K562 (cell line): ENCODE measurements at regions of chr2 and their contacts with region 1.

Region 1: DNA sequence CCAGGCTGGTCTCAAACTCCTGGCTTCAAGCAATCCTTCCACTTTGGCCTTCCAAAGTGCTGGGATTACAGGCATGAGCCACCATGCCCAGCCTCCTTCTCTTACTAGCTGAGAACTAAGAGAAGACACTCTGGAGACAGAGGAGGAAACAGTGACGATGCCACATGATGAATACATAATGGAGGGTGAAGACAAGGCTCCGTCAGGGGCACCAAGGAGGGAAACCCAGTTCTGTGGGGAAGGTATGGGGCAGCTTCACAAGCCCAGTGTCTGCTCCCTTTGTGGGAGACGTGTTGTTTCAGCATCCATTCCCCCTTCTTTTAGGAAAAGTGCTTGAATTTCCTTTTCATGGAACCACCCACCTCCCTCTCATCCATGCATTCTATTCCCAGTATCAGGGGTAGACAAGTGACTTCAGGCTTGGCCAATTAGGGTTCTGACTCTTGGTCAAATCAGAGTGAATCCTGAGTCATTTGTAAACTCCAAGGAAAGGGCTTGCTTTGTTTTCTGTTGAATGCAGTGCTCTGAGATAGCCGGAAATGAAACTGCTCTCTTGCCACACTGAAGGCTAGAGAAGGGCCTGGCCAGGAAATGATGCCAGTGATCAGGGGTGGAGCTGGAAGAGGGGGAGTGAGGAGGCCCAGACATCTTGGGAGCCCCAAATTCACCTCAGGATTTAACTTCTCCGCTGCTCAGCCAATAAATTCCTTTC is 23.7 kb downstream of the TMEM127 start:
- DNase-seq: no peak
- ATAC-seq: no peak
- H3K4me3 ChIP-seq: no peak overlapping the region
- H3K27ac ChIP-seq: no peak overlapping the region
- H3K4me1 ChIP-seq: peaks cover 5 to 18% of the 10 kb centered on the region in 2 experiments; a peak in 4 of 5 replicates
- H3K27me3 ChIP-seq: no peaks in the 10 kb centered on the region
- CTCF ChIP-seq: no peak
- EP300 ChIP-seq: no peak
- POLR2A ChIP-seq: no peak
- RAD21 ChIP-seq: no peak

Region 2: DNA sequence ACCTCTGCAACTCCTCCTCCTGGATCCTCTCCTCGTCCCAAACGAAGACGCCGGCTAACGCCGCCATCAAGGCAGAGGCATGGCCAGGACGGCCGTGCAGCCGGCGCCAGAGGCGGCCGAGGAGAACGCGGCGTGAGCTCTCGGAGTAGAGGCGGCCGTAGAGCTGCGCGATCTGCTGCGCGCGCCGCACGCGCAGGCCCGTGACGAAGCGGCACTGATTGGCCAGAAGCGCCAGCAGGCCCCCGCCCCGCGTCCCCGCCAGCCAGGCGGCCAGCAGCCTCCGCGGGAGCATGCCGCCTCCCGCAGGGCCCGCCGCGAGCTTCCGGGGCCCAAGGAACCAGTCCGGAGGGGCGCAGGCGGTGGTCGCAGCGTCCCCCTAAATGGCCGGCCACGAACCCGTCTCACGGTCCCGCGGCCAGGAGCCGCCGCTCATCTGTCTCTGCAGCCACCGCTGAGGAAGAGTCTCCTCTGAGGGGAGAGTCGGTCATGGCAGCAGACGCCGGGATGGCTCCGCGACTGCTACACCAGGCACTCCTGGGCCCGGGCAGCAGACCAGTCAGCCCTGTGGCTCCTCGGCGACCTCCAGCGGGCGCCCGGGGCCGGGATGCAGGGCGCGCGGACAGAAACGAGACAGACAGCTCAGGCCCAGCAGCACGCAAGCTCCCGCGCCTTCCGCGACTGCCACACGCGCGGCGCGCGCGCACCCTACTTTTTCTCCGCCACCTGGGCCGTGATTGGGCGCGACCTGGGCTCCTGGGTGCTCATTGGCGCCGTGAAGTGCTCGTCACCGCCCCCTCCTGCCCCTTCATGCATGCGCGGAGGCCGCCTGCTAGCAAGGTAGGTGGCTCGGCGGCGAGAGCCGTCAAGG is 33.7 kb before region 1 on chr2 and contains the start of gene STARD7:
- CTCF ChIA-PET with region 1: no interaction called
- POLR2A ChIA-PET with region 1: interaction called, 12 read pairs
- in situ Hi-C with region 1: no loop called
- intact Hi-C with region 1: no loop called
- DNase-seq: peak; percentile 96 to 99 (median 98)
- ATAC-seq: peak; percentile 94
- H3K4me3 ChIP-seq: peak within 1 kb of the TSS; percentile 84
- H3K27ac ChIP-seq: peak within 1 kb of the TSS; percentile 97
- H3K4me1 ChIP-seq: peaks cover 26 to 28% of the 10 kb centered on the region in 2 experiments
- H3K27me3 ChIP-seq: no peaks in the 10 kb centered on the region
- CTCF ChIP-seq: peak in 2 of 3 experiments; percentile 17 to 36; a peak in 2 of 6 replicates
- EP300 ChIP-seq: no peak
- POLR2A ChIP-seq: peak; percentile 98
- RAD21 ChIP-seq: peak; percentile 23 to 40
- polyA plus RNA-seq, gene STARD7: 90.9 to 140 TPM

Region 3: GRCh38 chr2:96231316-96231715 is 10.7 kb before region 1 on chr2:
- CTCF ChIA-PET with region 1: no interaction called
- POLR2A ChIA-PET with region 1: interaction called, 14 read pairs
- in situ Hi-C with region 1: no loop called
- intact Hi-C with region 1: no loop called
- DNase-seq: no peak
- ATAC-seq: no peak
- H3K4me3 ChIP-seq: no peak overlapping the region
- H3K27ac ChIP-seq: no peak overlapping the region
- H3K4me1 ChIP-seq: no peaks in the 10 kb centered on the region
- H3K27me3 ChIP-seq: no peaks in the 10 kb centered on the region
- CTCF ChIP-seq: no peak
- EP300 ChIP-seq: no peak
- POLR2A ChIP-seq: no peak
- RAD21 ChIP-seq: no peak

Region 4: DNA sequence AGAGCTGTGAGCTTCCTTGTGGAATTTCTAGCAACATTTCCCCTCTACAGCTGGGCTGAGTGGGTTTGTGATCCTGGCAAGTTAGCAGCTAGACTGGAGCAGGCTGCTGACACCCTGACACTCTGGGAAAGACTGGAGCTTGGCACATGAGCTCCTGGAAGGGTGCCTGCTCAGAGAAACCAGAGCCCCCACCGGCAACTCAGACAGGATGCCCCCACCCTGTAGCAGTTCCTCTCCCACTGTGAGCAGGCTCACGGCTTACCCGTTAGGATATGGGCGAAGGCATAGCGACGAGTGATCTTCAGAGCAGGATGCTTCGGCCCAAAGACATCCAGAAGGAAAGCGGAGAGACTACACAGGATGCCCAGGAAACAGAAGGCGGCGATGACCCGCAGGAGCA is 12.5 kb after region 1 on chr2:
- CTCF ChIA-PET with region 1: no interaction called
- POLR2A ChIA-PET with region 1: interaction called, 12 read pairs
- in situ Hi-C with region 1: no loop called
- intact Hi-C with region 1: no loop called
- DNase-seq: no peak
- ATAC-seq: no peak
- H3K4me3 ChIP-seq: no peak overlapping the region
- H3K27ac ChIP-seq: no peak overlapping the region
- H3K4me1 ChIP-seq: peaks cover 3 to 6% of the 10 kb centered on the region in 2 experiments; a peak in 2 of 5 replicates
- H3K27me3 ChIP-seq: no peaks in the 10 kb centered on the region
- CTCF ChIP-seq: no peak
- EP300 ChIP-seq: no peak
- POLR2A ChIP-seq: no peak
- RAD21 ChIP-seq: no peak

Region 5: DNA sequence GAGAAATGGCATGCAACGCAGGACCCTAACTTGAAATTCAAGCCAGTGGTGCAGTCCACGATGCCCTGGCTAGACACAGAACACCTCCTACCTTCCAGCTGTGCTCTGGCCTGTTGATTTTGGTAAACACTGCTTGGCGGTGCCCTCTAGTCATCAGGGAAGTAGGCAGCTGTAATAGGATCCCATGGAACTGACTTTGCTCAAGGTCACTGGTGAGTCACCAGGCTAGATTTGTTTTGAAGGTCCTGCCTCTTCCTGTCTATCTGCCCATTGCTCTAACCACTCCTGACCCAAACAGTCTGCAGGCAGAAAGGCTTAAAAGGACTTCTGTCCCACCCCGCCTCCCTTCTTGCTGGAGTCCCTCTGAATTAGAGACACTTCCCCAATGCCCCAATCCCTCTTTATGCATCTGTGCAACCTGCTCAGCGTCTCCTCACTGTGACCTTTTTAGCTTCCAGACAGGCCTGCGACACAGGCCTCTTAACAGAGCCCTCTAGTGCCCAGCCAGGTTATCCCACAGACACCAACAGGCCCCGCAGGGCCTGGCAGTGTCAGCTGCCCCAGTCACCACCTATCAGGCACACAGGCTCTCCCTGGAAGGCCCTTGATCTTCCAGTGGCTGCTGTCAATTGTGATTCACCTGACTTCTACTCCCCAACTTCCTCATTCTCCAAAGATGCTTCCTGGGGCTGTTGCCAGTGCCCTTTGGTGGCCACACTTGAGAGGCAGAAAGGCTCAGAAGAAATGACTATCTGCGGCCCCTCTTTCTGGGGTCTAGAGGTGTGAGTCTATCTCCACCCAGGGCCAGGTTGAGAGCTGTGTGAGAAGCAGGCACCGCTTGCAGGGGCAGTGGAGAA is 18.6 kb after region 1 on chr2:
- CTCF ChIA-PET with region 1: no interaction called
- POLR2A ChIA-PET with region 1: interaction called, 12 read pairs
- in situ Hi-C with region 1: no loop called
- intact Hi-C with region 1: no loop called
- DNase-seq: peak; percentile 56 to 75 (median 66)
- ATAC-seq: peak; percentile 78
- H3K4me3 ChIP-seq: no peak overlapping the region
- H3K27ac ChIP-seq: peak overlapping the region; percentile 62
- H3K4me1 ChIP-seq: peaks cover 24 to 34% of the 10 kb centered on the region in 2 experiments
- H3K27me3 ChIP-seq: no peaks in the 10 kb centered on the region
- CTCF ChIP-seq: peak; percentile 61 to 65 (median 64)
- EP300 ChIP-seq: no peak; the same call in 1 of the 2 replicates
- POLR2A ChIP-seq: no peak
- RAD21 ChIP-seq: peak; percentile 41 to 51